WTC11 (cell line): ENCODE measurements at regions of chr3 and their contacts with region 1.

Region 1: DNA sequence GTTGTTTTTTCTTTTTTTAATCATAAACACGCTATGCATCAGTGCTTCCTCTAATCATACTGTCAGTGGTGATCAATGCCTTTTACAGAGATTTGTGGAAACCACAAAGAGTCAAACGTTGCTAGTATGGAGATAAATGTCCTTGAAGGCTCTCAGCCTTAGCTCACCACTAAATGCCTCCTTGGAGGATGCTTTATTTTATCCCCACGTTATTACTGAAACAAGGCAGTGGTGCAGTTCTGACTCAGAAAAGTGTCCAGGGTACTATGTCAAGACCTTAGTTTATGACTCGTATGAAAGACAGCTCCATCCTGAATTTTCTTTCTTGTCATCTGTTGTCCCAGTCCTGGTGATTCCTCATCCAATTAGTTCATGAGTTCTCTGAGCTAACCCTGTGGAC is 1146.8 kb downstream of the IGSF11 start:
- DNase-seq: no peak
- ATAC-seq: no peak
- H3K4me3 Mint-ChIP-seq: no peak overlapping the region
- H3K27ac Mint-ChIP-seq: no peak overlapping the region
- H3K4me1 Mint-ChIP-seq: peaks cover 13% of the 10 kb centered on the region
- H3K27me3 Mint-ChIP-seq: no peaks in the 10 kb centered on the region
- CTCF ChIP-seq: no peak

Region 2: GRCh38 chr3:117898722-117899522 is 11.0 kb after region 1 on chr3:
- CTCF ChIA-PET with region 1: interaction called, 11 read pairs
- POLR2A ChIA-PET with region 1: no interaction called
- DNase-seq: no peak
- ATAC-seq: peak; percentile 78
- H3K4me3 Mint-ChIP-seq: no peak overlapping the region
- H3K27ac Mint-ChIP-seq: no peak overlapping the region
- H3K4me1 Mint-ChIP-seq: no peaks in the 10 kb centered on the region
- H3K27me3 Mint-ChIP-seq: no peaks in the 10 kb centered on the region
- CTCF ChIP-seq: peak; percentile 37

Region 3: DNA sequence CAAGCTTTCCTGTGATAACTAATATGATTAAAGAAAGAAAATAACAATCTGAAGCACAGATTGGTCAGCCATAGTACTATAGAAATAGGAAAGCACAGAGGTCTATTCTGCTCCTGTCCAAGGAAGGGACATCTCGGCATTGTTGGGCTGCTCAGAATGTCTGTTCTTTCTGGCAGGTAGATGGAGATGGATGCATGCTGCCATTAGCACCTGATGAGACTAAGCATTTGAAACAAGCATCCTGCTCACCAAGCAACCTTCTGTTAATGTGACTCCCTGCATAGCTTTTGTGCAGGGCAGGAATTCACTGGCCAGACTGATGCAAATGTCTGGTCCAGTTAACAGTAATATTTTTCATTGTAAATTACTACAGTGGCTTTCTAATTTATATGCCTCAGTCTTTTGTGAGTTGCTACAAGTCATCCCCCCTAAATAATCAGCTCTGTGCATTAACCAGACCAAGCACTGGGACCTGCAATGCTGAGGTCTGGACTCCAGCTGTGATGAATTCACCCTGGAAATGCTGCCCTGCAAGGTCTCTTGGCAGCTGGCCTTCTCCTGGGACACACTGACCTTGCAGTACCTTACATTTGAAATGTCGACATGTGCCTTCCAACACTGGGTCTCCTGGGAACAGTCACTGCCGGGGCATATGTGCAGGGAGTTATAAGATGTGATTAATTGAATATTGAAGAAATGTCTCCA is 23.1 kb after region 1 on chr3:
- CTCF ChIA-PET with region 1: no interaction called
- POLR2A ChIA-PET with region 1: no interaction called
- DNase-seq: peak; percentile 18
- ATAC-seq: peak; percentile 88
- H3K4me3 Mint-ChIP-seq: no peak overlapping the region
- H3K27ac Mint-ChIP-seq: peak overlapping the region; percentile 25; the same call in 1 of the 2 replicates
- H3K4me1 Mint-ChIP-seq: peaks cover 12% of the 10 kb centered on the region
- H3K27me3 Mint-ChIP-seq: no peaks in the 10 kb centered on the region
- CTCF ChIP-seq: no peak